Left cardiac atrium (tissue), 4 donors: ENCODE measurements at regions of chr19 and their contacts with region 1.

Region 1: GRCh38 chr19:48899781-48900476 is at the start of gene NUCB1:
- DNase-seq: peak; percentile 99
- ATAC-seq: peak; percentile 97 to 98
- total RNA-seq, gene NUCB1: 279 to 342 TPM

Region 2: GRCh38 chr19:48842789-48843162 is 57.2 kb before region 1 on chr19:
- intact Hi-C with region 1: no loop called
- DNase-seq: peak; percentile 31
- ATAC-seq: peak; percentile 54 to 56

Region 3: DNA sequence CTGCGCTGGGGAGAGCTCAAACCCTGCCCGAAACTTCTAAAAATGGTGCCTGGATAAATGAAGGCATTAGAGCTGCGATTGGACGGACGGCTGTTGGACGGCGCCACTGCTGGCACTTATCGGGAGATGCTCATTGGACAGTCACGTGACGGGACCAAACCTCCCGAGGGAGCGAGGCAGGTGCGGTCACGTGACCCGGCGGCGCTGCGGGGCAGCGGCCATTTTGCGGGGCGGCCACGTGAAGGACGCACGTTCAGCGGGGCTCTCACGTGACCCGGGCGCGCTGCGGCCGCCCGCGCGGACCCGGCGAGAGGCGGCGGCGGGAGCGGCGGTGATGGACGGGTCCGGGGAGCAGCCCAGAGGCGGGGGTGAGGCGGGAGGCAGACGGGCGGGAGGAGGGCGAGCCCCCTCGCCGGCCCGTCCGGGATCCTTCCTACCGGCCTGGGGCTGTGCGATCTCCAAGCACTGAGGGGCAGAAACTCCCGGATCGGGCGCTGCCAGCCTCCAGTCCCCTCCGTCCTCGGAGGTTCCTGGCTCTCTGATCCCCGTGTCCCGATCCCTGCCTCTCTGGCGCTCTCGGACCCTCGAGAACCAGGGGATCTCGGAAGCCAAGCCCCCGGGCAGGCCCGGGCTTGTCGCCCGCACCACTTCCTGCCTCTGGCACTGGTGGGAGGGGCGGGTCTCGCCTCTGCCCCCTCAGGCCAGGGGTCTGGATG is 54.8 kb after region 1 on chr19 and contains the start of gene BAX:
- intact Hi-C with region 1: loop called in 1 of 2 experiments (anchors 10 kb)
- DNase-seq: peak; percentile 98
- ATAC-seq: peak; percentile 96 to 97
- total RNA-seq, gene BAX: 28.8 to 36.1 TPM